ENCODE measurements at regions of chr1 and their contacts with region 1.

Region 1: DNA sequence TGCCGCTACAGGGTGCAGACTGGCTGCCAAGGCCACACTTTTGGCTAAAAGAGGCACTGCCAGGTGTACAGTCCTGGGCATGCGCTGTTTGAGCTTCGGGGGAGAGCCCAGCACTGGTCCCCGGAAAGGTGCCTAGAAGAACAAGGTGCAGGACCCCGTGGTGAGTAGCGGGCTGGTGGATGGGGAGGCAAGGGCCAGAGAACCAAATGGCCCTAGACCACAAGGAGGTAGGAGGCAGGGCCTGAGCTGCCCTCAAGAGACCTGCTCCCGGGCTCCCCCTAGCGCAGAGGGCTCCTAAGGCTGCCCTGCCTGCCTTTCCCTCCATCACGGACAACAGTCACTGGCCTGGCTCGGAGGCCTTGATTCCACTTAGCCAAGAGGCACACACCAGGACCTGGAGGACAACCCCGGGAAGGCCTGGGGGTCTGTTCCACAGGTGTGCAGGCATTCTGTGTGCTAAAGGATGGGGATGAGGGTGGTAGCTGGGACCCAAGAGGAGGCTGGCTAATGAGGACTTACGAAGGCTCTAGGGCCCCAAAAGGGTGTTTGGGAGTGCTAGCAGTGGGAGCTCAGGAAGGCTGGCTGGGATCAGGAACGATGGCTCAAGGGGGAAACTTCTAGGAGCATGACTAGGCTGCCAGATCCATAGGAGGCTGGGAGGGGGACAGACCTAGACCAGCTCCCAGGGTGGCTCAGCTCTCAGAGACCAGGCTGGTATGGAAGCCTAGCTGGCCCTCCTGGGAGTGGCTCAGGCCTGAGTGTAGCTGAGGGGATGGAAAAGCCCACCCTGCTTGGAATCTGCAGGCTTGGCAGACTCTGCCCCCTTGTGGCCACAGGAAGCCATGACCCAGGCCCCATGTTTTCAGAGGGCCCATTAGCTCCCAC is 742 bp downstream of the ARTN start:
- DNase-seq: peak; percentile 67
- H3K27ac ChIP-seq: peak overlapping the region; percentile 96
- CTCF ChIP-seq: peak; percentile 84

Region 2: GRCh38 chr1:43772978-43773377 is 161.4 kb before region 1 on chr1:
- CTCF ChIA-PET with region 1: interaction called, 150 read pairs
- POLR2A ChIA-PET with region 1: no interaction called
- DNase-seq: no peak
- H3K27ac ChIP-seq: peak overlapping the region; percentile 19; the same call in 1 of the 2 replicates
- CTCF ChIP-seq: no peak

Region 3: GRCh38 chr1:43908863-43909262 is 25.5 kb before region 1 on chr1:
- CTCF ChIA-PET with region 1: interaction called, 20 read pairs
- POLR2A ChIA-PET with region 1: no interaction called
- DNase-seq: no peak
- H3K27ac ChIP-seq: peak overlapping the region; percentile 24; the same call in 1 of the 2 replicates
- CTCF ChIP-seq: no peak; the same call in 1 of the 2 replicates

Region 4: GRCh38 chr1:43946236-43947060 is 12.1 kb after region 1 on chr1 and contains the start of gene IPO13:
- CTCF ChIA-PET with region 1: interaction called, 20 read pairs
- POLR2A ChIA-PET with region 1: interaction called, 3 read pairs
- DNase-seq: peak; percentile 93
- H3K27ac ChIP-seq: peak within 1 kb of the TSS; percentile 90
- CTCF ChIP-seq: peak; percentile 86

Region 5: DNA sequence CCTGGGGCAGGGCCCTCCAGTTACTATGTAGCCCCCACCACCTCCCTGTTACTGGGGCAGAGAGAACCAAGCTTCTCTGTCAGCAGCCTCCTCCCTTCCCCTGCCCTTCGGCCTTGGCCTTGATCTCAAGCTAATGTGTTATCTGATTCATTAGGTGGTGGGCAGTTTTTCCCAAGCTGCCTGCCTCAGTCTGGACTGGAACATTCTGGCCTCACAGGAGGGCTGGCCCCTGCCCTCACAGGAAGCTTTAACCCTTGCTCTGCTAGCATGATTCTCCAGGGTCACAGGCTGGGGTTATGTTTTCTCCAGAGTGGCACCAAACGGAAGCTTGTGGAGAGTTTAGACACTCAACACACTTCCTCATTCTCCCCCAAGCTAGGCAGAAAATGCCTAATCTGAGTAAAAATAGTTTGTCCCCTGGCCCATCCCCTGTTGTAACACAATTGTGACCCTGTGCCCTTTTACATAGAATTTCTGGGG is 134.1 kb after region 1 on chr1:
- CTCF ChIA-PET with region 1: no interaction called
- POLR2A ChIA-PET with region 1: no interaction called
- DNase-seq: no peak
- H3K27ac ChIP-seq: no peak overlapping the region
- CTCF ChIP-seq: no peak

Measured in RWPE1 (cell line).